Naive thymus-derived CD8-positive, alpha-beta T cell (primary cell): ENCODE measurements at regions of chr6 and their contacts with region 1.

Region 1: GRCh38 chr6:137823826-137824555 is 43.1 kb upstream of the TNFAIP3 start:
- DNase-seq: peak in 9 of 10 donors; percentile 63 to 99 (median 95)
- ATAC-seq: peak; percentile 71 to 73
- H3K4me3 Mint-ChIP-seq: peak overlapping the region; percentile 67 to 85 (median 77)
- H3K27ac Mint-ChIP-seq: peak overlapping the region; percentile 98 to 100 (median 99)
- H3K4me1 Mint-ChIP-seq: peaks cover 29 to 87% (median 76%) of the 10 kb centered on the region in 4 donors
- H3K27me3 Mint-ChIP-seq: no peaks in the 10 kb centered on the region

Region 2: DNA sequence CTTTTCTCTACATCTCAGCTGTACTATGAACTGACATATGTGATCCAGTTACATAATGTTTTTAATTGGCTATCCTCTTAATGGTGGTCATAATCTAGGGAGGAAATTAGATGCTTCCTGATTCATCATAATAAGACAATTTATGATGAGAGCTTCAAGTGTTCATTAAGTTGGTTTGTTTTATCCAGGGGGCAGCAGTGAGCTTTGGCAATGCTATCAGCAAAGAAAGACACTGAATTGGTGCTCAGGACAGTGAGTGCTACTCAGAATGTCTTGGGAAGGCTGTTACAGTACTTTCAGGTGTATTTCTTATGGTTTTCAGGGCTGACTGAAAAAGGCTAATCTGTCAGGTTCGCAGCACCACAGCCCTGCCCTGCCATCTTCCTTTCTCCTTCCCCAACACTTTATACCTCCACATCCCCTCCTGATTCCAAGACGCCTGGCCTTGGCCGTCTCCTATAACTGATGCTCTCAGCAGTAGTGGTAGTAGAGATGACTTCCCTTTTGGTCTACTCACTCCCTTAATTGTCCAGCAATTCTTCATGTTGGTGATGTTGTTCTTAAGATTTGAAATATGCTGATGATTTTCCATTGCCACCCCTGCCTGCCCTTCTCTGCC is 23.9 kb before region 1 on chr6:
- POLR2A ChIA-PET with region 1: interaction called, 28 read pairs
- DNase-seq: peak; percentile 15 to 90 (median 76)
- ATAC-seq: peak; percentile 75 to 88
- H3K4me3 Mint-ChIP-seq: peak overlapping the region in 3 of 10 donors; percentile 27 to 59 (median 52)
- H3K27ac Mint-ChIP-seq: peak overlapping the region; percentile 80 to 96 (median 92)
- H3K4me1 Mint-ChIP-seq: peaks cover 28 to 61% (median 58%) of the 10 kb centered on the region in 4 donors
- H3K27me3 Mint-ChIP-seq: no peaks in the 10 kb centered on the region

Region 3: GRCh38 chr6:137811121-137811915 is 12.7 kb before region 1 on chr6:
- POLR2A ChIA-PET with region 1: interaction called, 23 read pairs
- DNase-seq: peak; percentile 46 to 87 (median 68)
- ATAC-seq: peak; percentile 95 to 98
- H3K4me3 Mint-ChIP-seq: peak overlapping the region; percentile 55 to 85 (median 74)
- H3K27ac Mint-ChIP-seq: peak overlapping the region; percentile 83 to 98 (median 95)
- H3K4me1 Mint-ChIP-seq: peaks cover 22 to 60% (median 39%) of the 10 kb centered on the region in 4 donors
- H3K27me3 Mint-ChIP-seq: no peaks in the 10 kb centered on the region

Region 4: GRCh38 chr6:137861550-137862337 is 37.8 kb after region 1 on chr6:
- POLR2A ChIA-PET with region 1: interaction called, 55 read pairs
- DNase-seq: no peak
- ATAC-seq: no peak
- H3K4me3 Mint-ChIP-seq: peak overlapping the region in 2 of 10 donors; percentile 1 to 14
- H3K27ac Mint-ChIP-seq: peak overlapping the region in 9 of 10 donors; percentile 2 to 88 (median 62)
- H3K4me1 Mint-ChIP-seq: peaks cover 11 to 33% (median 29%) of the 10 kb centered on the region in 4 donors
- H3K27me3 Mint-ChIP-seq: no peaks in the 10 kb centered on the region